CD8-positive, alpha-beta T cell (primary cell): ENCODE measurements at regions of chr5 and their contacts with region 1.

Region 1: DNA sequence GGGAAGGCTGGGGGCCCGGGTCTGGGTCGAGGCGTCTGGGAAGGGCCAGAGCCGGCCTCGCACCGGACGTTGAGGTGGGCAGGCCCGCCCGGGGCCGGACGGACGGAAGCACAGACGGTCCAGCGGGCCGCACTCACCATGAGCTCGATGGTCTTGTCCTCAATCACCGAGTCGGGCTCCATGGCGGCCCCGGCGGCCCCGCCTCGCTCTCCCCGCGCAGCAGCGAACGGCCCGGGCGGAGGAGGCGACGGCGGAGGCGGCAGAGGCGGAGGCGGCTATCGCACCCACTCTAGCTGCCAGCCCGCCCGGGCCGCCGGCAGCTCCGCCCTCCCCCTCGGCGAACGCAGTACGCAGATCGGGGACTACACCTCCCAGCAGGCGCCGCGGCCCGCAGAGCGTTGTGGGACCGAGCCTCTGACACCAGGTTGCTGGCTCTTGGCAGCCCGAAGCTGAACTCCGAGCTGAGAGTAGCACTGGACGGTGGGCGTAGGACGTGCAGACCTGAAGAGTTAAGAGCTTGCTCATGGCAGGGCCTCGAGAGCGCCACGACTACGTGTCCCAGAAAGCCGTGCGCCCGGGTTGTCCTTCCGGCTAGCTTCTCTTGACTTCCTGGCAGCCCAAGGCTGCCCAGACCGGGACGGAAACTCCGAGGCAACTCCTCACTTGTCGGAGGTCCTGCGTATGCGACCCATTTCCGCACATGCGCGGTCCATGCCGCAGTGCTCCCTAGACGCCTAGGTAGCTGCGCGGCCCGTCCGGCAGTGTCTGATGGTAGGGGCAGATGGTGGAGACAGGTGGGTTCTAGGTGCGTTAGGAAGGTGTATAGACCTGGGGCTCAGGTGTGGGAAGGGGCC is at the start of gene FBXW11:
- DNase-seq: peak; percentile 87 to 98 (median 94)
- ATAC-seq: peak; percentile 87
- H3K4me3 ChIP-seq: peak within 1 kb of the TSS; percentile 78 to 96
- H3K4me3 Mint-ChIP-seq: peak within 1 kb of the TSS; percentile 95
- H3K27ac ChIP-seq: peak within 1 kb of the TSS; percentile 96 to 99
- H3K27ac Mint-ChIP-seq: peak within 1 kb of the TSS; percentile 98
- H3K4me1 ChIP-seq: peaks cover 35% of the 10 kb centered on the region
- H3K4me1 Mint-ChIP-seq: peaks cover 48% of the 10 kb centered on the region
- H3K27me3 ChIP-seq: no peaks in the 10 kb centered on the region
- H3K27me3 Mint-ChIP-seq: no peaks in the 10 kb centered on the region
- CTCF ChIP-seq: no peak
- total RNA-seq, gene FBXW11: 28.8 to 32.6 TPM

Region 2: DNA sequence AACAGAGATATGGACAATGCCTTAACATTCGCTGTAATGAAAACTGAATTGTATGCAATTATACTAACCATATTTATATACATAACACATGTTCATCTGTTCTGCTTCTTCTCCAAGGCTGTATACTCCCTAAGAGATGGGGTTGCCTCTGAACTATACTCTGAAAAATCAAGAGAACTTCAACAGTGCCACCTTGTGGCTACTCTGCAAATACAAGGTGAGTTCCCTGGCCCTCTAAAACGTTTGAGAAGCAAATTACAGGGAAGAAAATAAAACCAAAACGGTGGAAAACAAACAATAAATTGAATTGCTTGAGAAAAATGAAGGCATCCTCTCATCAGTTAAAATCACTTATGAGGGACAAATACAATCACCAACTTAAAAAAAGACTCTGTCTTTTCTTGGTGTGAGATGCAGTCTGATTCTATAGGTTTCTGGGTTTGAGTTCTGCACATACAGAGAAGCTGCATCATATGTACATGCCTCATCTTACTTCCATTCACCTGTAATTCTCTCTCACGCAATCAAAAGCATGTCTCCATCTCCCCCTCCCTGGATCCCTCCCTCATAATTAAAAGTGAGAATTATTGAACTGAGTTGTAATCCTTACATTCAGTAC is 98.7 kb before region 1 on chr5:
- CTCF ChIA-PET with region 1: interaction called, 27 read pairs
- POLR2A ChIA-PET with region 1: interaction called, 13 read pairs
- intact Hi-C with region 1: loop called in 1 of 2 experiments (anchors 2 kb)
- DNase-seq: peak; percentile 11 to 69 (median 41)
- ATAC-seq: peak; percentile 71
- H3K4me3 ChIP-seq: no peak overlapping the region
- H3K4me3 Mint-ChIP-seq: no peak overlapping the region
- H3K27ac ChIP-seq: no peak overlapping the region
- H3K27ac Mint-ChIP-seq: no peak overlapping the region
- H3K4me1 ChIP-seq: no peaks in the 10 kb centered on the region
- H3K4me1 Mint-ChIP-seq: peaks cover 41% of the 10 kb centered on the region
- H3K27me3 ChIP-seq: no peaks in the 10 kb centered on the region
- H3K27me3 Mint-ChIP-seq: no peaks in the 10 kb centered on the region
- CTCF ChIP-seq: peak; percentile 86

Region 3: GRCh38 chr5:171986772-171987171 is 19.8 kb before region 1 on chr5:
- CTCF ChIA-PET with region 1: interaction called, 3 read pairs
- POLR2A ChIA-PET with region 1: interaction called, 10 read pairs
- intact Hi-C with region 1: no loop called
- DNase-seq: no peak
- ATAC-seq: no peak
- H3K4me3 ChIP-seq: no peak overlapping the region
- H3K4me3 Mint-ChIP-seq: no peak overlapping the region
- H3K27ac ChIP-seq: no peak overlapping the region
- H3K27ac Mint-ChIP-seq: peak overlapping the region; percentile 27
- H3K4me1 ChIP-seq: peaks cover 17% of the 10 kb centered on the region
- H3K4me1 Mint-ChIP-seq: peaks cover 52% of the 10 kb centered on the region
- H3K27me3 ChIP-seq: no peaks in the 10 kb centered on the region
- H3K27me3 Mint-ChIP-seq: no peaks in the 10 kb centered on the region
- CTCF ChIP-seq: no peak

Region 4: DNA sequence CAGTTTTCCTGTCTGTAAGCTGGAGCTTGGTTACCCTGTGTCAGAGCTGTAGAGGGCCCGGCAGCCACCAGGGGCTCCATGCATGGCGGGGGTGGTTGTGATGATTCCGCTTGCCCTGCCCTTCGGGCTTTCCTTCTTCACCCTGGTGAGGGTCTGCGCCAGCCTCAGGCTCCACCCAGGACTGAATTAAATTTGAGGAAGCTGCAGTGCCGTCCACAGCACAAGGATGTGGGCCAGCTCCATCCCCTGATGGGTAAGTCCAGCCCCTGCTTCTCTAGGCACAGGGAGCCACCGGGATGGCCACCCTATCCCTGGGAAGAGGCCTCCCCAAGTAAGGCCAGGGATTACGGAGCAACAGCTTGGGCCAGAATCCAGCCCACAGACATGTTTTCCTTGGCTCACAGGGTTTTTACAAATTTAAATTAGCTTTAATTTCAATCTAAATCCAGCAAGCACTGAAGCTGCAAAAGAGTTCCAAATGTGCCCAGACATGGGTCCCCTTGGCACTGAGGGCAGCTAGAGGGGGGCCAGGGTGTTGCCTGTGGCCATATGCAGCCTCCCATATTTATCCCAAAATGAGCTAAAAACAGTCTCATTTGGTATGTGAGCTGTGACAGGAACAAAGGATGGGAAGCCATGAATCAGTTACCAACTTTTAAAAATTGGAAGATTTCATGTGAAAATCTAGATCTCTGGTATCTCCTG is 89.1 kb after region 1 on chr5:
- CTCF ChIA-PET with region 1: no interaction called
- POLR2A ChIA-PET with region 1: no interaction called
- intact Hi-C with region 1: no loop called
- DNase-seq: no peak
- ATAC-seq: no peak
- H3K4me3 ChIP-seq: no peak overlapping the region
- H3K4me3 Mint-ChIP-seq: no peak overlapping the region
- H3K27ac ChIP-seq: no peak overlapping the region
- H3K27ac Mint-ChIP-seq: no peak overlapping the region
- H3K4me1 ChIP-seq: peaks cover 3% of the 10 kb centered on the region
- H3K4me1 Mint-ChIP-seq: peaks cover 10% of the 10 kb centered on the region
- H3K27me3 ChIP-seq: no peaks in the 10 kb centered on the region
- H3K27me3 Mint-ChIP-seq: no peaks in the 10 kb centered on the region
- CTCF ChIP-seq: no peak

Region 5: GRCh38 chr5:172106511-172107356 is 100.2 kb after region 1 on chr5:
- CTCF ChIA-PET with region 1: no interaction called
- POLR2A ChIA-PET with region 1: no interaction called
- intact Hi-C with region 1: loop called in 1 of 2 experiments (anchors 5 kb)
- DNase-seq: peak; percentile 31 to 81 (median 69)
- ATAC-seq: peak; percentile 42
- H3K4me3 ChIP-seq: no peak overlapping the region
- H3K4me3 Mint-ChIP-seq: peak overlapping the region; percentile 8
- H3K27ac ChIP-seq: peak overlapping the region in 1 of 2 experiments; percentile 51
- H3K27ac Mint-ChIP-seq: peak overlapping the region; percentile 84
- H3K4me1 ChIP-seq: peaks cover 36% of the 10 kb centered on the region
- H3K4me1 Mint-ChIP-seq: peaks cover 48% of the 10 kb centered on the region
- H3K27me3 ChIP-seq: no peaks in the 10 kb centered on the region
- H3K27me3 Mint-ChIP-seq: no peaks in the 10 kb centered on the region
- CTCF ChIP-seq: peak; percentile 98

Region 6: DNA sequence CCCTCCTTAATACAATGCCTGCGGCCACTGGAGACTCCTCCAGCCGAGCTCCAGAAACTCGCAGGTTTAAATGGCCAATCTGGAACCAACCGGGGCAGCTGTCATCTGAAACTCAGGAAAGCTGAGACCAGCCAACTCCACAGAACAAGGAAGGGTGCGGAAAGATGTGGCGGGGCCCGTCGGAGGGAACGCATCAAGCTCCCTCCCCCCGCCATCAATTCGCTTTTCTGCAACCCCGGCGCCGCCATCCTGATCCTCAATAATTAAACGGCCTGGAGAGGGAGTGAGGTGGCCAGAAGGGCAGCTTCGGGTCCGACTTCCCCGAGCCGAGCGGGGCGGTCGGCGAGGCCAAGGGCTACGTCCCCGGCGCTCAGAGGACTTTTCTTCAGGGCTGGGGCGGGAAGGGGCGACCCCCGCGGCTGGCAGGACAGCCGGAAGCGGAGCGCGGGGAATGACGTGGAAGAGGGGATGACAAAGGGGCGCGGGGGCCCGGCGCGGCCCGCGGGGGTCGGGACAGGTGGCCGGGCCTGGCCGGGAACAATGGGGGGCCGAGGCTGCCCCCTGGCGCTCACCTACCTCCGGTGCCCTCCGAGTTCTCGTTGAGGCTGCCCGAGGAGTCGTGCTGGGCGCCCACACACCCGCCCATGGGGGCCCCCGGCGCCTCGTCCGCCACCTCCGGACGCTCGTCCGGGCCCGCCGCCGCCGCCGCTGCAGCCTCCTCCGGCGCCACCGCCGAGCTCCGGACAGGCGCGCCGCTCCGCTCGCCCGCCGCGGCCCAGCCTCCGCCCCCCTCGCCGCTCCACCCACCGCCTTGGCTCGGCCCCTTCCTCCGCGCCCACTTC is 276.7 kb after region 1 on chr5 and contains the start of gene UBTD2:
- CTCF ChIA-PET with region 1: no interaction called
- POLR2A ChIA-PET with region 1: interaction called, 4 read pairs
- intact Hi-C with region 1: loop called (anchors 1 to 5 kb)
- DNase-seq: peak; percentile 44 to 85 (median 70)
- ATAC-seq: peak; percentile 76
- H3K4me3 ChIP-seq: peak within 1 kb of the TSS; percentile 76 to 78
- H3K4me3 Mint-ChIP-seq: peak within 1 kb of the TSS; percentile 88
- H3K27ac ChIP-seq: no peak within 1 kb of the TSS
- H3K27ac Mint-ChIP-seq: peak within 1 kb of the TSS; percentile 77
- H3K4me1 ChIP-seq: peaks cover 18% of the 10 kb centered on the region
- H3K4me1 Mint-ChIP-seq: peaks cover 26% of the 10 kb centered on the region
- H3K27me3 ChIP-seq: no peaks in the 10 kb centered on the region
- H3K27me3 Mint-ChIP-seq: no peaks in the 10 kb centered on the region
- CTCF ChIP-seq: peak; percentile 61
- total RNA-seq, gene UBTD2: 0.78 to 0.79 TPM

Region 7: GRCh38 chr5:173615884-173616576 is 1609.5 kb after region 1 on chr5:
- CTCF ChIA-PET with region 1: no interaction called
- POLR2A ChIA-PET with region 1: no interaction called
- intact Hi-C with region 1: loop called in 1 of 2 experiments (anchors 5 kb)
- DNase-seq: peak; percentile 41 to 88 (median 70)
- ATAC-seq: peak; percentile 60
- H3K4me3 ChIP-seq: peak overlapping the region; percentile 81 to 89
- H3K4me3 Mint-ChIP-seq: peak overlapping the region; percentile 95
- H3K27ac ChIP-seq: peak overlapping the region; percentile 85 to 91
- H3K27ac Mint-ChIP-seq: peak overlapping the region; percentile 97
- H3K4me1 ChIP-seq: peaks cover 34% of the 10 kb centered on the region
- H3K4me1 Mint-ChIP-seq: peaks cover 52% of the 10 kb centered on the region
- H3K27me3 ChIP-seq: no peaks in the 10 kb centered on the region
- H3K27me3 Mint-ChIP-seq: no peaks in the 10 kb centered on the region
- CTCF ChIP-seq: peak; percentile 73